Lower lobe of right lung (tissue), 2 donors: ENCODE measurements at regions of chr11 and their contacts with region 1.

Region 1: DNA sequence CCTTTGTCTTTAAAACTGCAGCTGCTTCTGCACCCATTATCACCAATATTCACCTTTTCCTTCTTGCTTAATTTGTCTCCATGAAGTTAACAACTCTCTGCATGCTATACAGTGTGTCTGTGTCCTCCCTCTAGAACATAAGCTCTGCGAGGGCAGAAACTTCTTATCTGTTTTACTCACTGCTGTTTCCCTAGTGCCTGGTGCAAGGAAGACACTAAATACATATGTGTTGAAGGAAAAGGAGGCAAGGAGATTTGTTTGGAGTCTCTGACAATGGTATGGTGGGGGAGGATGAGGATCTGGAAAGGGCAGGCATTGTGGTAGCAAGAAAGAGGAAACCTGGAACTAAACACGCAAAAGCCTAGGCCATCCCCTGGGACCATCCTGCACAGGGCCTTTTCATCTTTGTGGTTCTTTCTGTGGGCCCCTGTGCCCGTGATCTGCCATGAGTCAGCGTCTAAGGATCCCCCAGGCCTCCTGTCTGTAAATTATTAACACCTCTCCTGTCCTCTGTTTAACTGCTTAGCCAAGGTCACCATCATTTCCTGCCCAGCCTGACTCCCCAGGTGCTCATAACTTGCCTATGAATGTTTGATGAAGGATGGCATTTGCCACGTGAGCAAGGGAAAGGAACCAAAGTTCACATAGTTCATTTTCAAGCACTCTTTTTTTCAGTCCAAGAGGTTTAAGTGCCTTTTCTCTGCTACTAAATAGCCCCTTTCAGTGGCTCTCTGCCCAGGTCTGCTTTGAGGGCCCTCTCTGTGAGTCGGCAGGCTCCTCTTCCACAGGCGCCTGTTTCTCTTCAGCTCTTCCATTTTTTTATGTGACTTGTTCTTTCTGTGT is 131.1 kb downstream of the RASSF10 start:
- DNase-seq: peak; percentile 84
- ATAC-seq: peak; percentile 94 to 96
- H3K4me3 ChIP-seq: no peak overlapping the region
- H3K27ac ChIP-seq: no peak overlapping the region
- H3K4me1 ChIP-seq: peaks cover 10% of the 10 kb centered on the region
- H3K27me3 ChIP-seq: no peaks in the 10 kb centered on the region
- CTCF ChIP-seq: no peak

Region 2: GRCh38 chr11:12963792-12964536 is 176.3 kb before region 1 on chr11:
- intact Hi-C with region 1: loop called (anchors 10 kb)
- DNase-seq: peak; percentile 59
- ATAC-seq: peak; percentile 87 to 94
- H3K4me3 ChIP-seq: no peak overlapping the region
- H3K27ac ChIP-seq: no peak overlapping the region
- H3K4me1 ChIP-seq: peaks cover 5% of the 10 kb centered on the region
- H3K27me3 ChIP-seq: no peaks in the 10 kb centered on the region
- CTCF ChIP-seq: peak; percentile 82